IMR-90 (cell line): ENCODE measurements at regions of chr11 and their contacts with region 1.

Region 1: DNA sequence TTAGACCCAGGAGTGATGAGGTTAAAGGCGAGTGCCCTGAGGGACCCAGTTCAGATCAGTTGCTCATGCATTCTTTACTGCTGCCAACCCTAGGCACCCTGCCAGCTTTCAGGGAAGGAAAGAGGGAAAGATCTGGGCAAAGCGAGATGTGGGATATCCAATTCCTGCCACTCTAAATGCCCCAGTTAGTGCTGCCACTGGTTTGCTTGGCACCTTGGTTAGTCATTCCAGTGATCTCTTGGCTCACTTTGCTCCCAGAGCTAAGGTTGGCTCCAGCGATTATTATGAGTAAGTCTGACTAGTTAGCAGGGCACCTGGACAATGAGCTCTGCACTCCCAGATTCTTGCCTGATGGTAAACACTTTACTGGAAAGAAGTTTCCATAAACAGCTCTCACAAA is 85.0 kb downstream of the INSC start:
- DNase-seq: peak; percentile 71
- ATAC-seq: peak; percentile 12; the same call in 1 of the 2 replicates
- H3K4me3 ChIP-seq: no peak overlapping the region
- H3K27ac ChIP-seq: no peak overlapping the region
- H3K4me1 ChIP-seq: peaks cover 24% of the 10 kb centered on the region
- H3K27me3 ChIP-seq: no peaks in the 10 kb centered on the region
- CTCF ChIP-seq: no peak
- POLR2A ChIP-seq: no peak
- RAD21 ChIP-seq: no peak

Region 2: GRCh38 chr11:14519917-14520746 is 679.6 kb before region 1 on chr11 and contains the start of gene PSMA1:
- CTCF ChIA-PET with region 1: no interaction called
- POLR2A ChIA-PET with region 1: no interaction called
- dilution Hi-C with region 1: no loop called
- in situ Hi-C with region 1: no loop called
- intact Hi-C with region 1: loop called (anchors 10 kb)
- DNase-seq: peak; percentile 94
- ATAC-seq: peak; percentile 98
- H3K4me3 ChIP-seq: peak within 1 kb of the TSS; percentile 81
- H3K27ac ChIP-seq: peak within 1 kb of the TSS; percentile 95
- H3K4me1 ChIP-seq: no peaks in the 10 kb centered on the region; the same call in 1 of the 2 replicates
- H3K27me3 ChIP-seq: no peaks in the 10 kb centered on the region
- CTCF ChIP-seq: no peak
- POLR2A ChIP-seq: peak; percentile 91
- RAD21 ChIP-seq: no peak
- total RNA-seq, gene PSMA1: 194 and 219 TPM in 2 replicates

Region 3: DNA sequence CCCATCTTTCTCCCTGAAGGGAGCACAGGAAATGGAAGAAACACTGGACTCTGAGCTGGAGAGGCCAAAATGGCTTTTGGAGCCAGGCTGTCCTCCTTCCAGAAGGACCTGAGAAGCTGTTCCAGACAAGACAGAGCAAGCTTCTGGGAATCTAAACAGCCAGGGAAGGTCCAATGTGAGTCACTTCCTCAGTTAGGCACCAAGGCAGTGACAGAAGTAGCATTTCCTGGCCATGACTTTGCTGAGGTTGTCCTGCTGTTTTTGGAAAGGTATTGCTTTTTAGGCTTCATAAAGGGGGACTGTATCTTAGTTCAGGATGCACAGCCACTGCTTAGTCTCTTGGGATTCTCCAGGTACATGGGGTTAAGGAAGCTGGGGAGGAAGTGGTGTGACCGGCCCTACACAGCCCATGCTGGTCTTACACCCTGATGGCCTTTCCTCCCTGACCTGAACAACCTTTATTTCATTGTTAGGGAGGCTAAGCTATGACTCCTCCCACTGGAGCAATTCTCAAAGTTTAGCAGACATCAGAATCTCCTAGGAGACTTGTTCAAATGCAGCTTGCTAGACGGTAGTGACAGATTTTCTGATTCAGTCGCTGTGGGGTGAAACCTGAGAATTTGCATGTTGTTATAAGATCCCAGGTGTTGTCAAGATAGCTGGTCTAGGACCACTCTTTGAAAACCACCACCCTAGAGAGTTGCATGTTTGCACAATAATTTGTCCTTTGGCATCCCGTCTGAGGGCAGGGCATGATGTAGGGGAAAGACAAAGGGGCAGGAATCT is 91.8 kb before region 1 on chr11:
- CTCF ChIA-PET with region 1: interaction called, 5 read pairs
- POLR2A ChIA-PET with region 1: no interaction called
- dilution Hi-C with region 1: no loop called
- in situ Hi-C with region 1: loop called (anchors 5 kb)
- intact Hi-C with region 1: no loop called
- DNase-seq: peak; percentile 55
- ATAC-seq: peak; percentile 19; the same call in 1 of the 2 replicates
- H3K4me3 ChIP-seq: no peak overlapping the region
- H3K27ac ChIP-seq: peak overlapping the region; percentile 12; the same call in 1 of the 2 replicates
- H3K4me1 ChIP-seq: peaks cover 30% of the 10 kb centered on the region
- H3K27me3 ChIP-seq: no peaks in the 10 kb centered on the region
- CTCF ChIP-seq: no peak
- POLR2A ChIP-seq: no peak
- RAD21 ChIP-seq: no peak

Region 4: DNA sequence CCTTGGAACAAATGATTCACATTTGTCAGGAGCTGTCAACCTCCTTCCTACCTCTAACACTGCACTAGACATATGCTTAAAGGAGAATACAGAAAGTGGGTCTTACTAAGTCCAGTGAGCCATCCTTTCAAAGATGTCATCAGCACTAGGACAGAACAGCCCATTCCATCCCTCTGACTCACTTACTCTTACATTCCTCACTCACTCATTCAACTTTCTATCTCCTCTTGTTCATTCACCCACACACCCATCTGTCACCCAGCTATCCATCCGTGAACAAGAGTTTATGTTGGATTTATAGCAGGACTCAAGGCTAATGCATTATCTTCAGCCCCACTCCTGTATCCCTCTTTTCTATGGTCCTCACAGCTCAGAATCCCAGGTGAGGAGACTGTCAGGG is 75.8 kb before region 1 on chr11:
- CTCF ChIA-PET with region 1: interaction called, 3 read pairs
- POLR2A ChIA-PET with region 1: interaction called, 4 read pairs
- dilution Hi-C with region 1: no loop called
- in situ Hi-C with region 1: no loop called
- intact Hi-C with region 1: loop called (anchors 5 kb)
- DNase-seq: peak; percentile 90
- ATAC-seq: peak; percentile 69
- H3K4me3 ChIP-seq: no peak overlapping the region
- H3K27ac ChIP-seq: no peak overlapping the region; the same call in 1 of the 2 replicates
- H3K4me1 ChIP-seq: peaks cover 19% of the 10 kb centered on the region
- H3K27me3 ChIP-seq: no peaks in the 10 kb centered on the region
- CTCF ChIP-seq: no peak
- POLR2A ChIP-seq: no peak
- RAD21 ChIP-seq: no peak

Region 5: DNA sequence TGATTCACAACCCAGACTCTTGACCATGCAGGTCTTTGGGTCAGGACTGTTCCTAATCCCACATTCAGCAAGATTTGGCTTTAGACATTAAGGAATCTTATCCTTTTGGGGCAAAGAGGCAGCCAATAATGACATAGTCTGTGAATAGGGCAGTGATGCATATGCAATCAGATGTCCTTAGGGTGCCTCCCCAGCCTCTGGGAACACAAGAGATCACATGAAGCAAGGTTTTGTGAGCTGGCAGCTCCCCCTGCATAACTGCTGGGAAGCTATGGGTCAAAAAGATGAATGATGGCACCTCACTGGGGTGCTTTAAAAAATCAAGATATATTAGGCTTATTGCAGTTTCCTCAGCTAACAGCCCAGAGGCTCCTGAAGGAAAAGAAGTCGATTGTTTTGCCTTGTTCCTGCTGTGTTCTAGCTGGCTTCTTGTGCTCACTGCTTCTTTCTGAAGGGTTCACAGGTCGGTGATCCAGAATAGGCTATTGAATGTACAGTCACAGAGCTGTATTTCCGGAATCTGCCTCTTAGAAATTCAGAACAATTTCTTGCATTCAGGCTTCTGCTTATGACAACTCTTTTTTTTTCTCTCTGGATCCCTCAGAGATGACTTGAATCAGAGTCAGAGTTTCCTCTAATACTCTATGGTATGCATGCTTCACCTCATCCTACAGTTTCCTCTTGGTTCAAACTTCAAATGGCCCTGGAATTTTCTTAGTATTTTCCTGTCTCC is 53.3 kb before region 1 on chr11:
- CTCF ChIA-PET with region 1: no interaction called
- POLR2A ChIA-PET with region 1: interaction called, 10 read pairs
- dilution Hi-C with region 1: no loop called
- in situ Hi-C with region 1: no loop called
- intact Hi-C with region 1: no loop called
- DNase-seq: peak; percentile 59
- ATAC-seq: peak; percentile 65
- H3K4me3 ChIP-seq: no peak overlapping the region
- H3K27ac ChIP-seq: no peak overlapping the region
- H3K4me1 ChIP-seq: peaks cover 2% of the 10 kb centered on the region; the same call in 1 of the 2 replicates
- H3K27me3 ChIP-seq: no peaks in the 10 kb centered on the region
- CTCF ChIP-seq: no peak
- POLR2A ChIP-seq: no peak
- RAD21 ChIP-seq: no peak

Region 6: GRCh38 chr11:16001899-16002426 is 802.3 kb after region 1 on chr11:
- CTCF ChIA-PET with region 1: no interaction called
- POLR2A ChIA-PET with region 1: no interaction called
- dilution Hi-C with region 1: no loop called
- in situ Hi-C with region 1: no loop called
- intact Hi-C with region 1: no loop called
- DNase-seq: peak; percentile 95
- ATAC-seq: peak; percentile 85
- H3K4me3 ChIP-seq: peak overlapping the region; percentile 35; the same call in 1 of the 2 replicates
- H3K27ac ChIP-seq: peak overlapping the region; percentile 40; the same call in 1 of the 2 replicates
- H3K4me1 ChIP-seq: peaks cover 9% of the 10 kb centered on the region
- H3K27me3 ChIP-seq: no peaks in the 10 kb centered on the region
- CTCF ChIP-seq: no peak
- POLR2A ChIP-seq: no peak
- RAD21 ChIP-seq: no peak